ENCODE measurements at regions of chr1 and their contacts with region 1.

Region 1: DNA sequence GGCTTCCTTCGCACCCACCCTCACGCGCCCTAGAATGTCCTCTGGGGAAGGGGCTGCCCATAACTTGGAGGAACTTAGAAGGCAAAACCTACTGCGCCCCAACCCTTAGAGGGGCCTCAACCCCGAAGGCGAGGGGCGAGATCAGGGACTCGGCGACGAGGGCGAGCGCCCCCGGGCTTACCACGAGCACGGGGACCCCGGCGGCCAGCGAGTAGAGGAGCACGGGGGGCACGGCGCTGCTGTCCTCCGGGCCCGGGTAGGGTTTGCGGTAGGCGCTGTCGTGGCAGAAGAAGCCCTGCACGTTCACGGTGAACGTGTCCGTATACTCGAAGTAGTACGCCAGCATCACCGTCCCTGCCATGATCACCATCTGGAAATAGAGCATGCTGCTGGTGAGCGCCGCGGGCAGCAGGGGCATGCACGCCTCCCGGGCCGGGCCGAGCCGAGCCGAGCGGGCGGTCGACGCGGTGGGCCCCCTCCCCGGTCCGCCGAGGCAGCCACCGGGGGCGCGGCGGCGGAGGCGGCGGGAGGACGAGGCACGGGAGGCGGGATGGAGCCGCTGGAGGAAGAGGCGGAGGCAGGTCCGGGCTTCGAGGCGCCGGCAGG is 304 bp downstream of the PLPPR5 start:
- DNase-seq: no peak
- H3K27ac ChIP-seq: no peak overlapping the region
- CTCF ChIP-seq: no peak

Region 2: GRCh38 chr1:98813738-98814309 is 190.5 kb before region 1 on chr1:
- CTCF ChIA-PET with region 1: no interaction called
- POLR2A ChIA-PET with region 1: no interaction called
- DNase-seq: no peak
- H3K27ac ChIP-seq: no peak overlapping the region
- CTCF ChIP-seq: no peak

Region 3: GRCh38 chr1:99606306-99606705 is 601.9 kb after region 1 on chr1:
- CTCF ChIA-PET with region 1: interaction called, 11 read pairs
- POLR2A ChIA-PET with region 1: no interaction called
- DNase-seq: no peak
- H3K27ac ChIP-seq: no peak overlapping the region
- CTCF ChIP-seq: no peak

Measured in RWPE1 (cell line).